Transverse colon (tissue), 4 donors: ENCODE measurements at regions of chr12 and their contacts with region 1.

Region 1: GRCh38 chr12:93109551-93110203 is 180.6 kb upstream of the EEA1 start:
- DNase-seq: no peak
- H3K4me3 ChIP-seq: no peak overlapping the region
- H3K27ac ChIP-seq: peak overlapping the region in 2 of 4 donors; percentile 35 to 36
- H3K4me1 ChIP-seq: peaks cover 0 to 22% (median 9%) of the 10 kb centered on the region in 4 donors
- H3K27me3 ChIP-seq: no peaks in the 10 kb centered on the region
- CTCF ChIP-seq: no peak
- EP300 ChIP-seq: no peak
- POLR2A ChIP-seq: no peak

Region 2: GRCh38 chr12:93174048-93174447 is 64.4 kb after region 1 on chr12:
- in situ Hi-C with region 1: no loop called
- intact Hi-C with region 1: loop called (anchors 10 kb)
- DNase-seq: no peak
- H3K4me3 ChIP-seq: no peak overlapping the region
- H3K27ac ChIP-seq: peak overlapping the region; percentile 35 to 67 (median 54)
- H3K4me1 ChIP-seq: peaks cover 13 to 53% (median 30%) of the 10 kb centered on the region in 4 donors
- H3K27me3 ChIP-seq: no peaks in the 10 kb centered on the region
- CTCF ChIP-seq: no peak
- EP300 ChIP-seq: no peak
- POLR2A ChIP-seq: no peak

Region 3: GRCh38 chr12:93223440-93224426 is 114.1 kb after region 1 on chr12:
- in situ Hi-C with region 1: no loop called
- intact Hi-C with region 1: no loop called
- DNase-seq: no peak
- H3K4me3 ChIP-seq: no peak overlapping the region
- H3K27ac ChIP-seq: peak overlapping the region in 2 of 4 donors; percentile 24 to 35
- H3K4me1 ChIP-seq: peaks cover 3 to 12% (median 8%) of the 10 kb centered on the region in 4 donors
- H3K27me3 ChIP-seq: no peaks in the 10 kb centered on the region
- CTCF ChIP-seq: no peak
- EP300 ChIP-seq: no peak
- POLR2A ChIP-seq: no peak